ENCODE measurements at regions of chr12 and their contacts with region 1.

Region 1: DNA sequence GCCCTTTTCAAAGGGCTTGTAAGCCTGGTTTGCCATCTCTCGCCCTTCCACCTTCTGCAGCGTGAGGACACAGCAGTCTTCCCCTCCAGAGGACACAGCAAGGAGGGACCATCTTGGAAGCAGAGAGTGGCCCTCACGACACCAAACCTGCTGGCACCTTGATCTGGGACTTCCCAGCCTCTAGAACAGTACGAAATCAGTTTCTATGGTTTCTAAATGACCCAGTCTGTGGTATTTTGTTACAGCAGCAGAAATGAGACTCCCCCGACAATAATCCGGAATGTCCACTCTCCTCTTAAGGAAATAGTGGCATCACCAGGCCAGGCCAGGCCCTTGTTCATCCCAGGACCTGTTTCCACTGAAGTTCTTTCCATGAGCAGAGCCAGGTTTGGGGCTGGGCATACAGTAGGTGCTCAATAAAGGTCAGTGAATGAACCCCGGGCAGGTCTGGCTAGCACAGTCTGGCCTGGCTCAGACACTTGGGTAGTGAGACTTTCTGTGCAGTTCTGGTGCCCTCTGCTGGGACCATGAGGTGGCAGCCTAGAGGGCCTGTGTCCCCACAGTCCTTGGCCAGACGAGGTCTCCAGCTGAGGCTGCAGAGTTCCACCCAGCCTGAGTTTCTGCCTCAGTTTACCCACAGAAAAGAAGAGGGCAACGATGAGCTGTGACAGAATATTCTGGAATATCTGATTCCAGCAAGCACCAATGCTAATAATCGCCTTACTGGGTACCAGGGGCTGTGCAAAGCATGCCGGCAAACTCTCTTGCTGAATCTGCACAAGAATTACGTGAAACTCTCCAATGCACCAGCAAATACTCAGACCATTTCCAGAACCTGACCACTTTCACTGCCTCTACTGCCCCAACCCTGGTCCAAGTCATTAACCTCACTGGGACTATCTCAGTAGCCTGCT is 14.0 kb downstream of the ABCB9 start:
- DNase-seq: peak; percentile 81
- H3K4me3 Mint-ChIP-seq: no peak overlapping the region
- H3K27ac Mint-ChIP-seq: no peak overlapping the region
- H3K4me1 Mint-ChIP-seq: peaks cover 13% of the 10 kb centered on the region
- H3K27me3 Mint-ChIP-seq: no peaks in the 10 kb centered on the region

Region 2: DNA sequence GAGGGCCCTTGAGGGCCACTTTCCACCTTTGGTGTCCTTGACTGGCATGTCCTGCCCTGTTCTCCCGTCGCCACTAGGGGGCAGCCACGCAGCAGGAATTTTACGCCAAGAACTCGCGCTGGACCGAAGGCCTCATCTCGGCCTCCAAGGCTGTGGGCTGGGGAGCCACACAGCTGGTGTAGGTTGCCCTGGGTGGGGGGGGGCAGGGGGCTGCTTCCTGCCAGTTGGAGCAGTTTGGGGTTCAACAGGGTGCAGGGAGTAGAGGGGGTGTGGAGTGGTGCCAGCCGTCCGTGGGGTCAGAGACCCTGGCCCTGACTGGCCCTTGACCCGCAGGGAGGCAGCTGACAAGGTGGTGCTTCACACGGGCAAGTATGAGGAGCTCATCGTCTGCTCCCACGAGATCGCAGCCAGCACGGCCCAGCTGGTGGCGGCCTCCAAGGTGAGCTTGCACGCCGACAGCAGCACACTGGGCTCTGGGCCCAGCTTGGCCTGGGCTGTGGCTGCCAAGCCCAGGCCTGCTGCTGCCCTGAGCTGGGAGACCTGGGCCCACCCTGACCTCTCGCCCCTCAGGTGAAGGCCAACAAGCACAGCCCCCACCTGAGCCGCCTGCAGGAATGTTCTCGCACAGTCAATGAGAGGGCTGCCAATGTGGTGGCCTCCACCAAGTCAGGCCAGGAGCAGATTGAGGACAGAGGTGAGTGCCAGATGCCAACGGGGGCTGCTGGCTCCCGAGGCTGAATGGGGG is 91.7 kb before region 1 on chr12:
- CTCF ChIA-PET with region 1: interaction called, 74 read pairs
- POLR2A ChIA-PET with region 1: interaction called, 9 read pairs
- DNase-seq: peak; percentile 84
- H3K4me3 Mint-ChIP-seq: no peak overlapping the region
- H3K27ac Mint-ChIP-seq: no peak overlapping the region
- H3K4me1 Mint-ChIP-seq: no peaks in the 10 kb centered on the region
- H3K27me3 Mint-ChIP-seq: no peaks in the 10 kb centered on the region